ENCODE measurements at regions of chr19 and their contacts with region 1.

Region 1: GRCh38 chr19:53076977-53077376 is 26.2 kb downstream of the ZNF160 start:
- DNase-seq: peak; percentile 73
- ATAC-seq: peak; percentile 88

Region 2: DNA sequence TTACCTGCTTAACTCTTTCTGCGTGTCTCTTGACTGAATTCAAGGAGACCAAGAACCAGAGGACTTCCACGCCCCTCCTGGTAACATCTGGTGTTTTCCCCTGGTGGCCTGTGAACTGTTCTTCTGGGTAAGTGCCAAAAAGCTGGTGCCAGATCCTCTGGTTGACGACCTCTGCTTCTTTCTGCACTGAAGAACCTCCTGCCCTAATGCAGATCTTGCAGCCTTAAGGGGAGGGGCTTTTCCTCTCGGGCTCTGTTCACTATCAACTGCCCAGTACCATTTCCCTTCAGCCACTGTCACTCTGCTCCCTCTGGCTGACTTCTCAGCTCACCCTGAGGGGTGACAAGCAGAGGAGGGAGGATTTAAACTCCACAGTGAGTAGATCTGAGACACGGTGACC is 69.4 kb before region 1 on chr19:
- intact Hi-C with region 1: no loop called
- DNase-seq: no peak
- ATAC-seq: peak; percentile 30

Region 3: GRCh38 chr19:53132141-53132991 is 55.4 kb after region 1 on chr19 and contains the start of gene ZNF415:
- intact Hi-C with region 1: loop called (anchors 10 kb)
- DNase-seq: peak; percentile 88
- ATAC-seq: peak; percentile 97
- total RNA-seq, gene ZNF415: 23.9 TPM